ENCODE measurements at regions of chr2 and their contacts with region 1.

Region 1: DNA sequence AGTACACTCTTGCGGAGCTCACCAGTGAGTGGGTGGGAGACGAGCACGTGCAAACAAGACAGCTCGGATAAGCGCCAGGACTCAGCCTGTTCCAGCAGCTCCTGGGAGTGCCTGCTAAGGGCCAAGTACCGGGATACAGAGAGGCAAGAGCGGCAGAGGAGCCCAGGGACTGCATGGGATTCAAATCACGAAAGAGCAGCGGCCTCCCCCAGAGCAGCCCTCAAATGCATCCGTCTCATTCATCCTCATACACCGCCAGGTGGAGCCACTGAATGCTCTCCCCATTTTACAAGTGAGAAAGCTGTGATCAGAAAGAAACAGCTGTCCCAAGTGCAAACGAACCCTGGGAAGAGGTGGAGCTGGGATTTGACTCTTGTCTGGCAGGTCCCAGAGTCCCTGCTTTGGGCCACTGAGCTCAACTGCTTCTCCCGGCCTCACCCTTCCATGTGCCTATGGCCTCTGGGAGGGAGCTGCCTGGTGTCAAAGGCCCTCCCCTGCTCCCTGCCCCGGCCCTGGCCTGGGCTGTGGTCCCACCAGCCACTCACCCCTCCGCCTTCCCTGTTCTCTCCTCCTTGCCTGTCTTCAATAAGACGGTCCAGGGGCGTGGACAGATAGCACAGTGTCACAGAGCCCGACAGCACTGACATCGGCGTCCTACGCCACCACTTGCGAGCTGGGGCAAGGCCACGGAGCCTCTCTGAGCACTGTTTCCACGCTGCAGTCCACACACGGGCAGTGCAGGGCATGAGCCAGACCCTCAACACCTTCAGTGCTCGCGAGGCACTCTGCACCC is 72.8 kb upstream of the TAF1B start:
- DNase-seq: peak; percentile 77
- ATAC-seq: peak; percentile 67
- H3K4me3 Mint-ChIP-seq: no peak overlapping the region
- H3K27ac Mint-ChIP-seq: no peak overlapping the region
- H3K4me1 Mint-ChIP-seq: peaks cover 45% of the 10 kb centered on the region
- H3K27me3 Mint-ChIP-seq: no peaks in the 10 kb centered on the region; the same call in 1 of the 2 replicates
- CTCF ChIP-seq: peak; percentile 31; the same call in 1 of the 2 replicates

Region 2: DNA sequence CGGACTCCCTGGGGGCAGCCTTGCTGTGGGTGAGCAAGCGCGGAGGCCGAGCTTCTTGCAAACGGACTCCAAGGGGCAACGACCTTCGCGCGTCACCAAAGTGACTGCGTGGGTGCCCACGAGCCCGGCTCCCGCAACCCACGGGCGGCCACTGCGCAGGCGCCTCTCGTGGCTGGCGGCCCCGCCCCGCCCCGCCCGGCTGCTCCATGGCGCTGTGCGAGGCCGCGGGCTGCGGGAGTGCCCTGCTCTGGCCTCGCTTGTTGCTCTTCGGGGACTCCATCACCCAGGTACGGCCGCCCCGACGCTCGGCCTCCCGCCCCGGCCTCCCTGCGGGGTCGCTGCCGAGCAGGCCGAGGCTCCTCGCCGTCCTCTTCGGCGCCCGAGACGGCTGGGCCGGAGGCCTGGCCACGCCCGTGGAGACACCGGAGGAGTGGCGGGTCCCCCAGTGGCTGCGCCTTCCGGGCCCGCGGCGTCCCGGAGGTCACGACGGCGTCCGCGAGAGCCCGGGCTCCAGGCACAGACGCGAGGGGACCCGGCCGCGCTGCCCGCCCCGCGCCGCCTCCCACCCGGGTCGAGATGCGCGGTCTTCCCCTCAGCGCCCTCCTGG is 296.0 kb before region 1 on chr2 and contains the start of gene IAH1:
- CTCF ChIA-PET with region 1: interaction called, 11 read pairs
- POLR2A ChIA-PET with region 1: interaction called, 3 read pairs
- DNase-seq: peak; percentile 22
- ATAC-seq: peak; percentile 62
- H3K4me3 Mint-ChIP-seq: peak within 1 kb of the TSS; percentile 70
- H3K27ac Mint-ChIP-seq: peak within 1 kb of the TSS; percentile 27; the same call in 1 of the 2 replicates
- H3K4me1 Mint-ChIP-seq: peaks cover 17% of the 10 kb centered on the region
- H3K27me3 Mint-ChIP-seq: peaks cover 11% of the 10 kb centered on the region
- CTCF ChIP-seq: no peak
- total RNA-seq, gene IAH1: 14.4 to 18.0 TPM (median 16.5 TPM) in 3 replicates

Region 3: GRCh38 chr2:9750224-9751215 is 20.0 kb before region 1 on chr2:
- CTCF ChIA-PET with region 1: interaction called, 11 read pairs
- POLR2A ChIA-PET with region 1: no interaction called
- DNase-seq: no peak
- ATAC-seq: no peak
- H3K4me3 Mint-ChIP-seq: no peak overlapping the region
- H3K27ac Mint-ChIP-seq: no peak overlapping the region
- H3K4me1 Mint-ChIP-seq: peaks cover 16% of the 10 kb centered on the region
- H3K27me3 Mint-ChIP-seq: no peaks in the 10 kb centered on the region; the same call in 1 of the 2 replicates
- CTCF ChIP-seq: no peak

Region 4: DNA sequence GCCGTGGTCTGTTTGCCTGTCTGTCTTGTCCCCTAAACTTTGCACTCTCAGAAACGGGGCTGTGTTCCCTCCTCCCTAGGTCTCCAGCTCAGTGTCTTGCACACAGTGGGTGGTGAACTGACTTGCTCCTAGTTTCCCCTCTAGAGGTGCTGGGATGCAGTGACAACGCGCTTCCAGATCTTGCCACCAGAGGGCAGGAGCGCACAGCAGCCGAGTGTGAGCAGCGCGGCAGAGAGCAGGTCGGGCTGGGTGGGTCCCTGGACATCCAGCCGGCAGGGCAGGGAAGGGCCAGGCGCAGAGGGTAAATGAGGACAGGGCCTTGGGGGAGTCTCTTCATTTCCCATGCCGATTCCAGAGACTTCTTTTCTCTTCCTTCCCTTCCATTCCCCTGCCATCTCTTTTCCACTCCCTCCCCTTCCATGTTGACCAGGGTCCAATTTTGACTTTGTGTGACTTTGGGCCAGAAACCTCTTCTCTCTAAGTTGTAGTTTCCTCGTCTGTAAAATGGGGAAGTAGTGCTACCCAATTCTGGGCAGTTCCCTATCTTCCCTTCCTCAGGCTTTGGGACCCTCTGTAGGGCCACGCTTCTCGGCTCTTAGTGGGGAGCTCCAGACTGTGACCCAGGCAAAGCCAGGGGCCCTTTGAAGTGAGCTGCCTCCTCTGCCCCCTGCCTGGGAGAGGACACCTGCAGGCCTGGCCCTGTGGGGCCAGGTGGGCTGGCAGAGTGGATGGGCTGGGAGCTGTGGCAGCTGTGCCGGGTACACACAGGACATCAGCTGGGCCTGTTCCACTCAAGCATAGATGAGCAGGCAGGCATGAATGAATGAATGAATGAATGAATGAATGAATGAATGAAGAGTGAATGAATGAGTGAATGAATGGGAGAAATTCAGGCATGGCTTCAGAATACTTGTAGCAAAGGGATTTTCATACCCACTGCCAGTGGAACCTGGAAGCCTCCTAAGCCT is 29.4 kb after region 1 on chr2:
- CTCF ChIA-PET with region 1: interaction called, 130 read pairs
- POLR2A ChIA-PET with region 1: no interaction called
- DNase-seq: peak; percentile 96
- ATAC-seq: peak; percentile 90
- H3K4me3 Mint-ChIP-seq: no peak overlapping the region
- H3K27ac Mint-ChIP-seq: peak overlapping the region; percentile 88; the same call in 1 of the 2 replicates
- H3K4me1 Mint-ChIP-seq: peaks cover 19% of the 10 kb centered on the region
- H3K27me3 Mint-ChIP-seq: no peaks in the 10 kb centered on the region
- CTCF ChIP-seq: peak; percentile 83

Region 5: DNA sequence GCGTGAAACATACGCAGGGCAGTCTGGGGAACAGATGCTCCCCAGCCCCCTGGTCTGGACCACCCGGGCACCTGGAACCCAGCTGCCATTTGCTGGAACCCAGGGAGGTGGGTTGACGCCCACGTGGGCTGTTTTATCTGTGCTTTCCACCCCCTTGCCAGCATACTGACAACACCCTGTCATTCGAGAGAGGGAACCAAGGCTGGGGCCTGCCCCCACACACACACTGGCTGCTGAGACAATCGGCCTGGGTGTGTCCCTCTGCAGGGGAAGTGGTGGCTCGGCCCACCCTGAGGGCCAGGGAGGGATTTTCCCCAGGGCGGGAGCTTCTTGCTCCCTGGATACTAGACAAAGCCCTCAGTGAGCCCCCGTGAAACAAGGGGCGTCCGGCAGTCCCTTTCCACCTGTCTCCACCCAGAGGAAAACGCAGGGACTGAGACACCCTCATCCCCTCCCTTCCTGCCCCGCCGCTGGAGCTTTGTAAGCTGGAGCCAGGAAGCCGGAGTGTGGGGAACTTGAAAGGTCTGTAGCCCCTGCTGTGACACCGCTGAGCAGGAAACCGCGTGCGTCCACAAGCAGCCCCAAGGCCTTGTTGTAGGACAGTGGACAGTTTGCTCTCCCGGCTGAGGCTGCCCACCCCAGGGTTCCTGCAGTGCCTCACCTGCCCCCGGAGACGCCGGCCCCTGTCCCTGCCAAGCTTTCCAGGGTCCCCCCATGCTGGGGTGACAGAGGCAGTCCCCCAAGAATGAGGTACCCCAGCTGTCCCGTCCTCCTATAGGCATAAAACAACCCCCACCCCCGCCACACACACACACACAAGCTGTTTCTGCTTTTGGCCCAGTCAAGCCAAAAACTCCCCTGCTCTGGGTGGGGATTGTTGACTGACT is 258.7 kb after region 1 on chr2:
- CTCF ChIA-PET with region 1: interaction called, 18 read pairs
- POLR2A ChIA-PET with region 1: no interaction called
- DNase-seq: peak; percentile 52
- ATAC-seq: peak; percentile 69
- H3K4me3 Mint-ChIP-seq: no peak overlapping the region
- H3K27ac Mint-ChIP-seq: no peak overlapping the region
- H3K4me1 Mint-ChIP-seq: peaks cover 19% of the 10 kb centered on the region
- H3K27me3 Mint-ChIP-seq: no peaks in the 10 kb centered on the region
- CTCF ChIP-seq: no peak

Region 6: DNA sequence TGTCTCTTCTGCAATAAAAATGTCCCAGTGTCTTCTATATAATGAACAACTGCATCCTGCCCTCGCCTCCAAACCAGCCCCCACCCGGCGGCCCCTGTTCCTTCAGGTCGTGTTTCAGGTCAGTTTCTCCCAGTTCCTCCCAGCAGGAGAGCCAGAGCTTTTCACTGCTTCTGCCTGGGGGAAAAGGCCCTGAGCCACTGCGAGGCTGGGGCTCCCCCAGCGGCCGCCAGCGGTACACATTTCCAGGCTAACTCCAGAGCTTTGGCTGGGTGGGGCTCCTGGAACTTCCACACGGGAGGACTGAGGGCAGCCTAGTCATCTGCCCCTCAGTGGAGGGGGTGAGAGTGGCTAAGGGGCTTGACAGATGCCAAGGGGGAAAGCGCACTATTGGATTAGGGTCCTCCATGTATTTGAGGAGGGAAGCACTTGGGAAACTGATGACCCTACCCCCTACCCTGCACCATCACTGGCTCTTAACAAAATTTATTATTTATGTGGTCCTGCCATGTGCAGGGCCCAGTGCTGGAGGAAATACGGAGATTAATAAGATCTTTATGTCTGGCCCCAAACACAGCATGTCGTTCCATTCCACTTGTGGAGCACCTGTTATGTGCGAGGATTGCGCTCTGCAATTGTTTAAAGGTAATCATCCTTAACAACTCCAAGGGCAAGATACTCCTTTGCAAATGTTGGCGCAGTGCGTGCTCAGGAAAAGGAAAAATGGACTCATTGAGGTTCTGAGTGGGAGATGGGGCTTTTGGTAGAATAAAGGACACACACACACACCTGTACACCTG is 327.0 kb after region 1 on chr2:
- CTCF ChIA-PET with region 1: interaction called, 12 read pairs
- POLR2A ChIA-PET with region 1: no interaction called
- DNase-seq: peak; percentile 82
- ATAC-seq: peak; percentile 96
- H3K4me3 Mint-ChIP-seq: no peak overlapping the region
- H3K27ac Mint-ChIP-seq: no peak overlapping the region
- H3K4me1 Mint-ChIP-seq: peaks cover 31% of the 10 kb centered on the region
- H3K27me3 Mint-ChIP-seq: peaks cover under 1% of the 10 kb centered on the region; the same call in 1 of the 2 replicates
- CTCF ChIP-seq: peak; percentile 85; the same call in 1 of the 2 replicates